ENCODE measurements at regions of chr6 and their contacts with region 1.

Region 1: GRCh38 chr6:33672808-33673207 is 38.7 kb downstream of the UQCC2 start:
- ATAC-seq: peak; percentile 77 to 89 (median 82)
- H3K4me3 ChIP-seq: no peak overlapping the region
- H3K27ac ChIP-seq: no peak overlapping the region
- H3K4me1 ChIP-seq: peaks cover 11 to 21% of the 10 kb centered on the region in 2 donors

Region 2: DNA sequence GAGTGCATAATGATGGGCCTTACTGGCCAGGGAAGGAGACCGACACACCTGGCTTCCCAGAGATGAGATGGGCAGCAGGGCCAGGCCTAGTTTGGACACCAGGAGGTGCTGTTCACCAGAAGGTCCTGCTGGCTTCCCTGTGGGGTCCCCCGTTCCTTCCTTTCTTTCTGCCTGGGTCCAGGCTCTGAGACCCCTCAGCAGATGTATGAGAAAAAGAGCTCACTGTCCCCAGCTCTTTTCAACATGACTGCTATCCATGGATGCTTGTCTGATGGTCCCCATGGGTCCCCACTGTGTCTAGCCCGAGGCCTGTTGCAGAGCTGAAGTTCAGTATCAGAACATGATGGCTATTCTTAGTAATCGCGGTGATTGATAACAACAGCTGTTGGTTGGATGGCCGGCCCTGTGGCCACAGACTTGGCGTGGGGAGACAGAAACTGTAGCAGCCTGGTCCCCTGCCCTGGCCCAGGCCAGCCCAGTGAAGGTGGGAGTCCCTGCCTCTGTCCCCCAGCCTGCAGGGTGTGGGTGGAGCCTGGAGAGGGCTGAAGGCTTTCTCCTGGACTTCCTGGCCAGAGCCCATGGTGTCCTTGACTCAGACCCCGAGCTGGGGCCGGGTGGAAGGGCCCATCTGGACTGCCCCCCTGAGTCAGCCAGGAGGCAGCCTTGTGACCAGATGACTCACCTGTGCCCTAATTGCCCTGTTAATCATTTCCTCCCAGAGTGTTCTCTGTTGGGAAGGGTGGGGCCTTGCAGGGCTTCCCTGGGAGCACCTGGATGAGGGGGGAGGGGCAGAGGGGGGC is 82.9 kb before region 1 on chr6:
- in situ Hi-C with region 1: loop called in 1 of 9 experiments (anchors 10 kb)
- ATAC-seq: peak; percentile 38 to 81 (median 72)
- H3K4me3 ChIP-seq: no peak overlapping the region
- H3K27ac ChIP-seq: peak overlapping the region in 1 of 2 donors; percentile 17
- H3K4me1 ChIP-seq: peaks cover 16 to 22% of the 10 kb centered on the region in 2 donors

Region 3: DNA sequence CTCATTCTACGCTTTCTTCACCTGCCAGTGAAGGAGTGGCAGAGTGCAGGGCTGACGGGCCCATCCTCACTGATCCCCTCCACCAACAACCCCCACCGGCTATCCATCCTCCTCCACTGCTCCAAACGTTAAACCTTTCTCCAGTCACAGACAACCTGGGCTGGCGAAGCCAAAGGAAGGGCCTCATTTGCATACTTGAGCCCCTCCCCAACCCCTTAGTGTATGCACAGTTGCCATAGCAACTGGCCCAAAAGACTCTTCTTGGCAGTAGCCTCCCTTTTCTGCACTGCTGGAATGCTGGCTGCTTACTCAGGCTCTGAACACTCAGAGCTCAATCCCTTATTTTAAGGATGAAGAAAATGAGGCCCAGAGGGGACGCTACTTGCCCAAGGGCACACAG is 342.8 kb after region 1 on chr6:
- in situ Hi-C with region 1: no loop called
- ATAC-seq: peak; percentile 68 to 100 (median 83)
- H3K4me3 ChIP-seq: no peak overlapping the region
- H3K27ac ChIP-seq: no peak overlapping the region
- H3K4me1 ChIP-seq: peaks cover 14 to 26% of the 10 kb centered on the region in 2 donors